ENCODE measurements at regions of chr5 and their contacts with region 1.

Region 1: DNA sequence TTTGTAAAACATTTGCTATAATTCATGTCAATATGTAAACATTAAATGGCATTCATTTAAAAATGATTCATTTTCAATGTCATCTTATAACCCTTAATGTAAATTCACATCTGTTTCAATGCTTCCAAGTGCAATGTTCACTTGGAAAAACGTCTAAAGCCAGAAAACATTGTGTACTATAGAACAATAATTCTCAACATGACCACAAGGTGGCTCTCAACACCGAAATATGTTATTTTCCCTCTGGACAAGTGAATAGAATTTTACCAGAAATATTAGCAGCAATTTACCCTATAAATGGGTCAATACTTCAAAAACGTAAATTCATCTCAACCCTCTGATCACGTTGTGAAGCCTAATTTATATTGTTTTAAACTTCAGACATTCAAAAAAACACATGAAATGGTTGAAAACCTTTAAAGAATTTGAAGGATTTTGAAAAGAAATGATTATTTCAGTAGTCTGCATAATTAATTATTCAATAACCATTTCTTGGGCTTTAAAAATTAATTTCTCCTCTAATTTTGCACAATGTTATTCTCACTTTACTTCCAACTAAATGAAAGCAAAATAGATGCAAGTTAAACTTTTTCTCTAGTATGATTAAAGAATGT is 11.0 kb downstream of the CDH10 start:
- DNase-seq: no peak
- H3K4me3 ChIP-seq: peak overlapping the region in 5 of 59 donors; percentile 0 to 39 (median 6)
- H3K27ac ChIP-seq: no peak overlapping the region
- H3K27me3 ChIP-seq: peaks cover 0 to 13% (median 0%) of the 10 kb centered on the region in 45 donors
- CTCF ChIP-seq: peak; percentile 52 to 89 (median 78)

Region 2: GRCh38 chr5:24555229-24555628 is 78.6 kb before region 1 on chr5:
- intact Hi-C with region 1: no loop called
- DNase-seq: no peak
- H3K4me3 ChIP-seq: no peak overlapping the region
- H3K27ac ChIP-seq: no peak overlapping the region
- H3K27me3 ChIP-seq: no peaks in the 10 kb centered on the region
- CTCF ChIP-seq: no peak

Region 3: DNA sequence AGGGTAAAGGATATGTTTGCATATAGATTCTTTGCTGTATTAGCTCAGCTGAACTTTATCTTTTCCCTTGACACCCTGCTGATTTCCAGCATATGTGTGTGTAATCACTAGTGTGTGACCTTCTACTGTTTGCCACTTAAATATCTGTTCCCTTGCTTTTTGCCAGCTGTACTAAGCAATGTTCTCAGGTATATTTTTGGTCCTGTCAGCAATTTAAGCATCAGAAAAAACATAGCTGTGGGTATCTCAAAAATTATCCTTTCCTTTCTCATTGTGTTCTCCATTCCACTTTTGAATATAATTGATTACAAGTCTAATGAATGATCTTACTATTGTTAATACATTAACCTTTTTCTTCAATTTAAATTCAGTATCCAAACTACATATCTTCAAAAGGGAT is 70.1 kb after region 1 on chr5:
- intact Hi-C with region 1: no loop called
- DNase-seq: no peak
- H3K4me3 ChIP-seq: no peak overlapping the region
- H3K27ac ChIP-seq: no peak overlapping the region
- H3K27me3 ChIP-seq: no peaks in the 10 kb centered on the region
- CTCF ChIP-seq: no peak

Region 4: DNA sequence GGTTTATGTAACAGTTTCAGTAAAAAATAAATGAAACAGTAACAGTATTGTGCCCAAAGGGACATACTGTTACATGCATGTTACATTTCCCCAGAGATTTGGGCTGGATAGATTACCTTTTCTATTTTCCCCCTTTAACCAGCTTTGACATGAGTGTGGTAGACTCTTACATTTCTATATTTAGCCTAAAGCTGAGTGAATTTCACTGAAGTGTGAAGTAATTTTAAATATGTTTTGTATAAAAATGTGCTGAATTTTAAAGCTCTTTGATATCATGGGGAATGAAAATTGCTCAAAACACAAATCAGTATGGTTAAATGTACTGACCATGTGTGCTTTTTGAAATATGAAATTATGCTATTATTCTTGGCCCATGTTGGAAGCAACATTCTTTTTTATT is 133.3 kb after region 1 on chr5:
- intact Hi-C with region 1: no loop called
- DNase-seq: no peak
- H3K4me3 ChIP-seq: no peak overlapping the region
- H3K27ac ChIP-seq: no peak overlapping the region
- H3K27me3 ChIP-seq: no peaks in the 10 kb centered on the region
- CTCF ChIP-seq: no peak

Region 5: DNA sequence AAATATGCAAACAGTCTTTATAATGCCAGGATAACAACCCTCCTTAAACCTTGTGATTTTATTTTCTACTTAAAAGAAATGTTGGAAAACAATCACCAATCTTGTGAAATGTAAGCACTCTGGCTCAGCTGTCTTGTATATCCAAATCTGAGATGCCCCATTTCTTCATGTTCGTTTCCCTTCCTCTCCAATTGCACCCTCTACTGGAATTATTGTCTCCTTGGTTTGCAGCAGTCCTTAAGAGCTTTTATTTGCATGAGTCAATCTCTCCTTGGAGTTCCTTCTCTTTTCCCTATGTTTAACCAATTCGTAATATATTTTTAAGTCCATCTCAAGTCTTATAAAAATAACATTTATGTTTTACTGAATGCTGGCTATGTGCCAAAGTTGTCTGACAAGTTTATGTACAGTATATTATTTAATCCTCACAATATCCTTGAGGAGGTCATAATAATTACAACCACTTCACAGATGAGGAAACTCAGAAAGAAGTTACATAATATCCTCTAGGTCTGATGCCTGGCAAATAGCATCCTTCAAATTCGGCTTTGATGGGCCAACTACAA is 373.0 kb after region 1 on chr5:
- intact Hi-C with region 1: loop called in 1 of 2 experiments (anchors 5 kb)
- DNase-seq: no peak
- H3K4me3 ChIP-seq: no peak overlapping the region
- H3K27ac ChIP-seq: no peak overlapping the region
- H3K27me3 ChIP-seq: no peaks in the 10 kb centered on the region
- CTCF ChIP-seq: peak in 39 of 56 donors; percentile 5 to 55 (median 29)

Region 6: GRCh38 chr5:26482810-26483375 is 1849.1 kb after region 1 on chr5:
- intact Hi-C with region 1: loop called in 1 of 2 experiments (anchors 10 kb)
- DNase-seq: peak in 4 of 10 donors; percentile 12 to 50 (median 44)
- H3K4me3 ChIP-seq: peak overlapping the region in 58 of 59 donors; percentile 12 to 66 (median 43)
- H3K27ac ChIP-seq: no peak overlapping the region
- H3K27me3 ChIP-seq: no peaks in the 10 kb centered on the region
- CTCF ChIP-seq: peak; percentile 37 to 80 (median 62)